Caki2 (cell line): ENCODE measurements at regions of chr20 and their contacts with region 1.

Region 1: GRCh38 chr20:32028647-32029372 is 18.6 kb downstream of the CCM2L start:
- DNase-seq: peak; percentile 34

Region 2: GRCh38 chr20:31859998-31860709 is 168.7 kb before region 1 on chr20:
- in situ Hi-C with region 1: loop called (anchors 10 kb)
- DNase-seq: peak; percentile 65